ENCODE measurements at regions of chr2 and their contacts with region 1.

Region 1: GRCh38 chr2:130911482-130911881 is 74.8 kb downstream of the ARHGEF4 start:
- DNase-seq: peak; percentile 58
- H3K4me3 ChIP-seq: peak overlapping the region in 1 of 3 experiments; percentile 44
- H3K27ac ChIP-seq: peak overlapping the region; percentile 48
- H3K4me1 ChIP-seq: peaks cover 49% of the 10 kb centered on the region
- H3K27me3 ChIP-seq: no peaks in the 10 kb centered on the region
- CTCF ChIP-seq: no peak

Region 2: GRCh38 chr2:130864830-130865800 is 46.4 kb before region 1 on chr2:
- CTCF ChIA-PET with region 1: no interaction called
- dilution Hi-C with region 1: loop called (anchors 5 kb)
- in situ Hi-C with region 1: no loop called
- intact Hi-C with region 1: no loop called
- DNase-seq: peak; percentile 93
- H3K4me3 ChIP-seq: no peak overlapping the region
- H3K27ac ChIP-seq: no peak overlapping the region
- H3K4me1 ChIP-seq: peaks cover 15% of the 10 kb centered on the region
- H3K27me3 ChIP-seq: no peaks in the 10 kb centered on the region
- CTCF ChIP-seq: no peak

Region 3: GRCh38 chr2:130873700-130874346 is 37.7 kb before region 1 on chr2:
- CTCF ChIA-PET with region 1: no interaction called
- dilution Hi-C with region 1: loop called (anchors 5 kb)
- in situ Hi-C with region 1: no loop called
- intact Hi-C with region 1: loop called (anchors 2 kb)
- DNase-seq: peak; percentile 53
- H3K4me3 ChIP-seq: no peak overlapping the region
- H3K27ac ChIP-seq: no peak overlapping the region
- H3K4me1 ChIP-seq: peaks cover 18% of the 10 kb centered on the region
- H3K27me3 ChIP-seq: no peaks in the 10 kb centered on the region
- CTCF ChIP-seq: peak; percentile 77 to 81

Region 4: DNA sequence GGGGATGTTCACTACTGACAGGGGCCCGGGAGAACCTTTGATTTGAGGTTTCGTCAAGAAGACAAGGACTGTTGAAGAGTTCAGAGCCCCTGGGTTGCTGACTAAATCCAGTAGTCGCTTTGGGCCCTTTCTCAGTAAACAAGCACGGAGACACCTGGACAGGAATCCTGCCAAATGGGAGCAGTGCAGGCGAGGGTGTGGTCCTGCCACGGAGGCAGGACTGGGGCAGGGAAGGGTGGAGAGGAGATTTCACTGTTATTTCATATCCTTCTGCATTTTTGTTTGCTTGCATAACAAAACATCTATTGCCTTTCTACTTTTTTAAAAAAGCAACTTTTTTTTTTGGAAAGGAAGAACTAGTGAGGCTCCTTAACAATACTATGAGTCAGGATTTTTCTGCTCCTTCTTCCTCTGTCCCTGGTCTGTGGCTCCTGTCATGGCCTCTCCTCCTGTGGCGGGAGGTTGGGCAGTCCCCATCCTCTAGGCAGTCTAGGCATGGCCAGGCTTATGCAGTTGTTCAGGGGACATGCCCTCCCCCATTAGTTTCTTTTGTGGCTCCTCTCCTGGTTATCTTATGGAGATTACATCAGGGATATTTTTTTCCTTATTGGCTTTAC is 17.0 kb before region 1 on chr2:
- CTCF ChIA-PET with region 1: interaction called, 3 read pairs
- dilution Hi-C with region 1: no loop called
- in situ Hi-C with region 1: no loop called
- intact Hi-C with region 1: loop called (anchors 2 kb)
- DNase-seq: peak; percentile 69
- H3K4me3 ChIP-seq: no peak overlapping the region
- H3K27ac ChIP-seq: no peak overlapping the region
- H3K4me1 ChIP-seq: peaks cover 22% of the 10 kb centered on the region
- H3K27me3 ChIP-seq: no peaks in the 10 kb centered on the region
- CTCF ChIP-seq: no peak

Region 5: GRCh38 chr2:130957915-130958314 is 46.4 kb after region 1 on chr2:
- CTCF ChIA-PET with region 1: no interaction called
- dilution Hi-C with region 1: loop called (anchors 5 kb)
- in situ Hi-C with region 1: no loop called
- intact Hi-C with region 1: no loop called
- DNase-seq: no peak
- H3K4me3 ChIP-seq: no peak overlapping the region
- H3K27ac ChIP-seq: no peak overlapping the region
- H3K4me1 ChIP-seq: no peaks in the 10 kb centered on the region
- H3K27me3 ChIP-seq: no peaks in the 10 kb centered on the region
- CTCF ChIP-seq: no peak

Region 6: GRCh38 chr2:130985206-130985780 is 73.8 kb after region 1 on chr2:
- CTCF ChIA-PET with region 1: no interaction called
- dilution Hi-C with region 1: no loop called
- in situ Hi-C with region 1: no loop called
- intact Hi-C with region 1: no loop called
- DNase-seq: no peak
- H3K4me3 ChIP-seq: no peak overlapping the region
- H3K27ac ChIP-seq: no peak overlapping the region
- H3K4me1 ChIP-seq: no peaks in the 10 kb centered on the region
- H3K27me3 ChIP-seq: no peaks in the 10 kb centered on the region
- CTCF ChIP-seq: no peak

Region 7: DNA sequence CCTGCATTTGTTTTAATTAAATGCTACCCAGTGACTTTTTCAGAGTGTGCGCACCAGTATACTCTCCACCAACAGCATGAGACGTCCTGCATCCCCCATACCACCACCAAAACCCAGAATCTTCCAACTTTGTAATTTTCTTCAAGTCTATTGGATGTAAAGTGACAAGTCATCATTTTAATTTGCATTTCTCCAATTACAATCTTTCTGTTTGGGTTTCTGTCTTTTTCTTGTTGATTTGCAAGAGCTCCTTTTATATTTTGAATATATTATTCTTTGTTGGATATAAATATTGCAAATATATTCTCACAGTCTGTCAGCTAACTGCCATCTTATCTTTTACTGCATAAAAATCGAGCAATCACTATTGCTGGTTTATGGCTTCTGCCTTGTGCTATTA is 85.2 kb after region 1 on chr2:
- CTCF ChIA-PET with region 1: no interaction called
- dilution Hi-C with region 1: no loop called
- in situ Hi-C with region 1: no loop called
- intact Hi-C with region 1: no loop called
- DNase-seq: no peak
- H3K4me3 ChIP-seq: no peak overlapping the region
- H3K27ac ChIP-seq: no peak overlapping the region
- H3K4me1 ChIP-seq: no peaks in the 10 kb centered on the region
- H3K27me3 ChIP-seq: no peaks in the 10 kb centered on the region
- CTCF ChIP-seq: no peak

Region 8: DNA sequence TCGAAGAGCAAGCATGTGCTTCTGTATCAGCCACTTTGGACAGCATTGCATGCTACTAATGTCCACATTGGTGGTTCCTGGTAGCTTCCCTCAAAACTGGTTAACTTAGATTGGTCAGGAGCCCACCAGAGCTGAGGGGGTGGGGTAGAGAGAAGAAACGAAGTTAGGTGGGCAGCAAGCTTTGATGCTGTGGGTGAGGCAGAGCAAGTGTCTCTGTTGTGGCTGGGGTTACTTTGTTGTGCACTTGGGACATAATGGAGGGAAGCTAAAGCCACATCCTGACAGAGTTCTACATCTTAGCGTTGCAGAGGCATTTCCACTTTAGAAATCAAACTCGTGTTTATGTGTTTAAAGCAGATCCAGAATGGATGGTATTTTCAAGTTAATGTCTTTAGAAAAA is 99.1 kb after region 1 on chr2:
- CTCF ChIA-PET with region 1: no interaction called
- dilution Hi-C with region 1: no loop called
- in situ Hi-C with region 1: no loop called
- intact Hi-C with region 1: no loop called
- DNase-seq: no peak
- H3K4me3 ChIP-seq: no peak overlapping the region
- H3K27ac ChIP-seq: no peak overlapping the region
- H3K4me1 ChIP-seq: peaks cover 17% of the 10 kb centered on the region
- H3K27me3 ChIP-seq: no peaks in the 10 kb centered on the region
- CTCF ChIP-seq: no peak

Region 9: GRCh38 chr2:131040661-131041401 is 129.3 kb after region 1 on chr2:
- CTCF ChIA-PET with region 1: no interaction called
- dilution Hi-C with region 1: no loop called
- in situ Hi-C with region 1: no loop called
- intact Hi-C with region 1: no loop called
- DNase-seq: no peak
- H3K4me3 ChIP-seq: no peak overlapping the region
- H3K27ac ChIP-seq: no peak overlapping the region
- H3K4me1 ChIP-seq: no peaks in the 10 kb centered on the region
- H3K27me3 ChIP-seq: no peaks in the 10 kb centered on the region
- CTCF ChIP-seq: no peak

Measured in mammary epithelial cell (primary cell).